PC-9 (cell line): ENCODE measurements at regions of chr4 and their contacts with region 1.

Region 1: GRCh38 chr4:69689599-69689998 is 36.6 kb upstream of the UGT2A1 start:
- DNase-seq: no peak
- H3K4me3 ChIP-seq: no peak overlapping the region
- H3K27ac ChIP-seq: no peak overlapping the region
- H3K4me1 ChIP-seq: no peaks in the 10 kb centered on the region
- H3K27me3 ChIP-seq: no peaks in the 10 kb centered on the region
- CTCF ChIP-seq: peak; percentile 73

Region 2: GRCh38 chr4:68909385-68909784 is 780.2 kb before region 1 on chr4:
- CTCF ChIA-PET with region 1: no interaction called
- POLR2A ChIA-PET with region 1: no interaction called
- intact Hi-C with region 1: no loop called
- DNase-seq: no peak
- H3K4me3 ChIP-seq: no peak overlapping the region
- H3K27ac ChIP-seq: no peak overlapping the region
- H3K4me1 ChIP-seq: peaks cover 9% of the 10 kb centered on the region; the same call in 1 of the 2 replicates
- H3K27me3 ChIP-seq: no peaks in the 10 kb centered on the region
- CTCF ChIP-seq: no peak

Region 3: GRCh38 chr4:69531251-69531650 is 158.3 kb before region 1 on chr4:
- CTCF ChIA-PET with region 1: no interaction called
- POLR2A ChIA-PET with region 1: no interaction called
- intact Hi-C with region 1: no loop called
- DNase-seq: no peak
- H3K4me3 ChIP-seq: no peak overlapping the region
- H3K27ac ChIP-seq: no peak overlapping the region
- H3K4me1 ChIP-seq: no peaks in the 10 kb centered on the region
- H3K27me3 ChIP-seq: no peaks in the 10 kb centered on the region
- CTCF ChIP-seq: no peak

Region 4: DNA sequence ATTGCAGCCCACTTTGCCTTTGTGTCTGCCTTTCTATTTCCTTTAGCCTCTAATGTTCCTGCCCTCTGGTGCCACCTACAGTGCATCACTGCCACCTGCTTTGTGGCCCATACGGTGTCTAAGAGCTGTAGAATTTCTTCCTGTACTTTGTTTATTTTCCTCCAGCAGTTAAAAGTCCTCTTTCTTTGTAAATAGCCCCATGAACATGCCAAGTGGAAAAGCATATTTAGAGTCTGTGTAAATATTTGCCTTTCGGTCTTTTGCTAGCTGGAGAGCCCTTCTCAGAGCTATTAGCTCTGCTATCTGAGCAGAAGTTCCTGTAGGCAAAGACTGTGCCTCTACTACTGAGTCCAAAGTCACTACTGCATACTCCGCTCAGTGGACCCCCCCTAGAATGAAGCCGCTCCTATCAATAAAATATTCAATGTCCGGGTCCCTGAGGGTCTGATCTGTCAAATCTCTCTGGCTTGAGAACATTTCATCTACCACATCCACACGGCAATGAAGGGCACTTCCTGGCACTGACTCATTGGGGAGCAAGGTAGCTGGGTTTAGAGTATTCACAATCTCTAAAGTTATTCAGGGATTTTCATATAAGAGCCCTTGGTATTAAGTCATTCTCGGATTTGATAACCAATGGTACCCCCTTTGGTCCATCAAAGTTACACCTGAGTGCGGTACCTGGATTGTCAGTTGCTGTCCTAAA is 134.0 kb after region 1 on chr4:
- CTCF ChIA-PET with region 1: no interaction called
- POLR2A ChIA-PET with region 1: no interaction called
- intact Hi-C with region 1: loop called (anchors 2 kb)
- DNase-seq: peak in 1 of 2 experiments; percentile 13
- H3K4me3 ChIP-seq: no peak overlapping the region
- H3K27ac ChIP-seq: no peak overlapping the region
- H3K4me1 ChIP-seq: no peaks in the 10 kb centered on the region
- H3K27me3 ChIP-seq: no peaks in the 10 kb centered on the region
- CTCF ChIP-seq: 0 out of 2 replicates have a peak, but pooled peaks have one; percentile 34

Region 5: DNA sequence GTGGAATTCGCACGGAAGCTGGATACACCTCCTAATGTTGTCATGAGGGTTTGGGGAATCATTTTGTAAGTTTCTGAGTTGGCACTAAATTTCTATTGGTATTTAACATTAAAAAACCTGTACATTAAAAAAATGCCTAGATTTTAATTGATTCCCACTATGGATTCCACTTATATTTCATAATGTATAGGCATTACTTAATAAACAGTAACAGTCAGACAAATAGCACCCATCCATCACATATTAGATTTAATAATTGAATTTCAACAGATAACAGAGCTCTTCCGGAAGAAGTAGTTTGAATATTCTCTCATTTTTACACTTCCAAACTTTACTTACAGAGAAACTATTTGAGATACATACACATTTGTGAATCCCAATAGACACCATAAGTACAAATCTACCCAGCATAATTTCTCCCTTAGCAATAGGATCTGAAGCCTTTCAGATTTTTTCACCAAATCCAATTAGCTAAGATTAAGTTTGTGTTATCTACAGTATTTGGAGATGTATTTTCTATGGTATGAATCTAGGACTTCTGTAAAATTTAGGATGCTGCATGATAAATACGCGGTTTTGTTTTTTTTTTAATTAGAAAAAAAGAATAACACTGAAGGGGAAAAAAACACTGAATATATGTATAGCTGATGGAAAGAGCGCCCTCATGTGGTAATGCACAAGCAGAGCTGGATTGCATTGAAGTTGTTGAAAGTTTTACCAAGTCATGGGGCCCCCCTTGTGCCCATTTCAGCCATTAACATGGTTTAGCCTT is 493.8 kb after region 1 on chr4:
- CTCF ChIA-PET with region 1: no interaction called
- POLR2A ChIA-PET with region 1: no interaction called
- intact Hi-C with region 1: loop called (anchors 10 kb)
- DNase-seq: peak in 1 of 2 experiments; percentile 7
- H3K4me3 ChIP-seq: no peak overlapping the region
- H3K27ac ChIP-seq: no peak overlapping the region
- H3K4me1 ChIP-seq: no peaks in the 10 kb centered on the region
- H3K27me3 ChIP-seq: no peaks in the 10 kb centered on the region
- CTCF ChIP-seq: peak; percentile 69

Region 6: DNA sequence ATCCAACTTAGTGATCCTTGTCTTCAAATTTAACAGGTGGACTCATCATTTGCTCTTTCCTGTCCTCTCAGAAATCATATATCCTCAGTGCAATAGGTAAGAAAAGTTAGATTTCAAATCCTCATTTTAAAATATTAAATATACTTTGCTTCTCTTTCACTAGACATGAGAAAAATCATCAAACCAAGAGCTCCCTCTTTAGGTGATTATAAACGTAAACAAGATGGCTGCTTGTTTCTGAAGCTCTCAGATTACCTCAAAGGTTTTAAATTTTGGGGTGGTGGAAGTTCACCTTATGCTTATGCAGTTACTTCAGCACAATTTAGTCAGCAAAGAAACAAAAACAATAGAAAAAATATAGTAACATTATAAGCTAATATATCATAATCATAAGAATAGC is 580.1 kb after region 1 on chr4:
- CTCF ChIA-PET with region 1: no interaction called
- POLR2A ChIA-PET with region 1: no interaction called
- intact Hi-C with region 1: loop called (anchors 2 kb)
- DNase-seq: no peak
- H3K4me3 ChIP-seq: no peak overlapping the region
- H3K27ac ChIP-seq: no peak overlapping the region
- H3K4me1 ChIP-seq: no peaks in the 10 kb centered on the region
- H3K27me3 ChIP-seq: no peaks in the 10 kb centered on the region
- CTCF ChIP-seq: peak; percentile 35; the same call in 1 of the 2 replicates

Region 7: GRCh38 chr4:70505151-70505748 is 815.7 kb after region 1 on chr4:
- CTCF ChIA-PET with region 1: no interaction called
- POLR2A ChIA-PET with region 1: no interaction called
- intact Hi-C with region 1: loop called (anchors 5 kb)
- DNase-seq: peak in 1 of 2 experiments; percentile 25
- H3K4me3 ChIP-seq: no peak overlapping the region
- H3K27ac ChIP-seq: no peak overlapping the region
- H3K4me1 ChIP-seq: no peaks in the 10 kb centered on the region
- H3K27me3 ChIP-seq: no peaks in the 10 kb centered on the region
- CTCF ChIP-seq: peak; percentile 81

Region 8: GRCh38 chr4:70559211-70559830 is 869.7 kb after region 1 on chr4:
- CTCF ChIA-PET with region 1: no interaction called
- POLR2A ChIA-PET with region 1: no interaction called
- intact Hi-C with region 1: loop called (anchors 1 kb)
- DNase-seq: peak in 1 of 2 experiments; percentile 25
- H3K4me3 ChIP-seq: no peak overlapping the region
- H3K27ac ChIP-seq: no peak overlapping the region
- H3K4me1 ChIP-seq: no peaks in the 10 kb centered on the region
- H3K27me3 ChIP-seq: no peaks in the 10 kb centered on the region
- CTCF ChIP-seq: peak; percentile 74